PC-9 (cell line): ENCODE measurements at regions of chr5 and their contacts with region 1.

Region 1: GRCh38 chr5:37847978-37848425 is 8.2 kb upstream of the GDNF start:
- DNase-seq: peak in 1 of 2 experiments; percentile 44
- H3K4me3 ChIP-seq: no peak overlapping the region
- H3K27ac ChIP-seq: no peak overlapping the region
- H3K4me1 ChIP-seq: no peaks in the 10 kb centered on the region
- H3K27me3 ChIP-seq: no peaks in the 10 kb centered on the region
- CTCF ChIP-seq: no peak

Region 2: GRCh38 chr5:37436146-37436934 is 411.7 kb before region 1 on chr5:
- CTCF ChIA-PET with region 1: no interaction called
- POLR2A ChIA-PET with region 1: no interaction called
- intact Hi-C with region 1: no loop called
- DNase-seq: no peak
- H3K4me3 ChIP-seq: no peak overlapping the region
- H3K27ac ChIP-seq: no peak overlapping the region
- H3K4me1 ChIP-seq: no peaks in the 10 kb centered on the region
- H3K27me3 ChIP-seq: no peaks in the 10 kb centered on the region
- CTCF ChIP-seq: no peak

Region 3: DNA sequence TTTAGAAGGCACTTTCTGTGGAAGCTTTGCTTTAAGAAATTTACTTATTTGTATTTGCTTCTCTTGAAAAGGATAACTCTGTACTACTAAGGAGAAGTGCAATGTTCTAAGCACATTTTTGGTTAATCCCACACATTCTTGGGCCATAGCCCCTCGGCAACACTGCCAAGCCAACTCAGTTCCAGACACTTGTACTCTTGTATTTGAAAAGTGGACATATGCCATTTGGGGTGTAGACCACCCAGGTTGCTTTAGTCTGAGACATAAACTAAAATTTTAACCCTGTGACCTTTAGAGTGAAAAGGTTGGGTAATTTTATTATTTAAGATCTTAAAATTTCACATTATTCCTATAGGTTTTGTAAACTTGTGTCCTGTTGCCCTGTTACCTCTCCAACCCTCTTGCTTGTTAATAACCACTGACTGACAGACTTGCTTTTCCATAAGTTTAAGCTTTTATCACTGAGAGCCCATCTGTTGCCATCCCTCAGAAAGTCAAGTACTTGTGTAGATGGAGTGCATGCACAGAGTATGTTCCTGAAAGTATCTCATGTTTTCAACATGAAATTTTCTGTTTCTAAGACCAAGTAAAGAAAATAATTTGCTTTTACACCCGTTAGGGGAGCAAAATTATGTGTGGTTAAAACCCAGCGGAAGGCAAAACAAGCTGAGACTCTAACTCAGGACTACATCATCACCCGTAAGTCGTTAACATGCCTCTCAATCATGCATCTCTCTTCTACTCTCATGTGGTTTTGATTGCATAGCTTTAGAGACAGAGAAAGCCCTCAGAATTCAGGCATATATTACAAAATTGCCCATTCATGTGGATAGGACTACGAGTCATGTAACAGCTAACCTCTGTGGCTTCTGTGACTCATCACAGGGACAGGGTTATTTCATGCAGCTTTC is 125.5 kb before region 1 on chr5:
- CTCF ChIA-PET with region 1: no interaction called
- POLR2A ChIA-PET with region 1: no interaction called
- intact Hi-C with region 1: no loop called
- DNase-seq: peak; percentile 32 to 93
- H3K4me3 ChIP-seq: no peak overlapping the region
- H3K27ac ChIP-seq: no peak overlapping the region
- H3K4me1 ChIP-seq: peaks cover 29% of the 10 kb centered on the region
- H3K27me3 ChIP-seq: no peaks in the 10 kb centered on the region
- CTCF ChIP-seq: no peak

Region 4: DNA sequence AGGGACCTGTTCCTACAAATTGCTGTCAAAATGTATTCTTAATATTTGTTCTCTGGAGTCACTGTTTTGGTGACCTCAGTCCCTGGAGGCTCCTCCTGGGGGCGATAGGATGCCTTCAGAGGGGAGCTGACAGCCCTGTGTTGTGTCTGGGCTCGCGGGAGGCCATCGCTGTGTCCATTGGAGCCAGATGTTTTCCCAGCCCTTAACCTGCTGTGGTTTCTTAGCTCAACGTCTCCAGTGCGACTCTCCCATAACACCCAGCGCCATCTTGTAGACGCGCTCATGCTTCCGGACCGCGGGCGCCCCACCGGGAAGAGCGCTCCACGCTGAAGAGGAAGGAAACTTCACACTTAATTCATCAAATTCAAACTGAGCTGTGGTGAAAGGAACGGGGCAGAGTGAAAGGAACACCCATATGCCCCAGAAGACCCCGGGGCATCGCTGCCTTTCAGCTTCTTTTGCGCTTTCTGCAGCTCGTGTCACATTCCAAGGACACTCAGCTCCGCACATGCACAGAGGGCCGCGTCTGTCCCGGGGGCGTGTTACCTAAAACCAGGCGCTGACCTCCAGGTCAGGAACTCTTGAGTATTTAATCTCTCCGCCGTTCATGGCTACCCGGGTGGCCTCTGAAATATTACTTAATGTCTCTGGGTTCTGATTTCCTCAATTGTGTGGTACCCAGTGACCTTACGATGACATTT is 104.2 kb after region 1 on chr5:
- CTCF ChIA-PET with region 1: no interaction called
- POLR2A ChIA-PET with region 1: no interaction called
- intact Hi-C with region 1: no loop called
- DNase-seq: no peak
- H3K4me3 ChIP-seq: no peak overlapping the region
- H3K27ac ChIP-seq: no peak overlapping the region
- H3K4me1 ChIP-seq: no peaks in the 10 kb centered on the region
- H3K27me3 ChIP-seq: no peaks in the 10 kb centered on the region
- CTCF ChIP-seq: no peak

Region 5: GRCh38 chr5:38117784-38118479 is 269.9 kb after region 1 on chr5:
- CTCF ChIA-PET with region 1: no interaction called
- POLR2A ChIA-PET with region 1: interaction called, 10 read pairs
- intact Hi-C with region 1: no loop called
- DNase-seq: no peak
- H3K4me3 ChIP-seq: no peak overlapping the region
- H3K27ac ChIP-seq: no peak overlapping the region
- H3K4me1 ChIP-seq: no peaks in the 10 kb centered on the region
- H3K27me3 ChIP-seq: peaks cover 18% of the 10 kb centered on the region
- CTCF ChIP-seq: no peak